HCT116 (cell line): ENCODE measurements at regions of chr1 and their contacts with region 1.

Region 1: DNA sequence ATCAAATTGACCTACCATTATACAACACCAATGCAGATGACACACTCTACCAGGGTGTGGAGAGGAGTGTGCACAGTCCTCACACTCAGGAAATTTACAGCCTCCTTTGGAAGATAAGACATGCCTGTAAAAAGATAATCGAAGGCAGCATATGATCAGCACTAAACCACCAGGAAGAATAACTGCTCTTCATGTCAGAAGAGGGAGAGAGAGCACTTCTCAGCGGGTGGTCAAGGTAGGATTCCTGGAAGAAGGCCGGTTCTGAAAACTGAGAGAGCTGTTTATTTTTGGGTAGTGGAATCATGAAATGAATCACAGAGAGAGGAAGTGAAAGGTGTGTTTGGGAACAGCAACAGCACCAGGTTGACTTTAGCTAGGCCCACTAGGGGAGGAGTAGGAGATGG is 14.0 kb upstream of the ZNF697 start:
- DNase-seq: no peak
- ATAC-seq: no peak
- H3K4me3 ChIP-seq: no peak overlapping the region
- H3K27ac ChIP-seq: no peak overlapping the region
- H3K4me1 ChIP-seq: peaks cover 0 to 5% of the 10 kb centered on the region in 2 experiments; a peak in 1 of 4 replicates
- H3K27me3 ChIP-seq: peaks cover 2% of the 10 kb centered on the region; the same call in 1 of the 2 replicates
- CTCF ChIP-seq: 0 out of 6 replicates have a peak, but pooled peaks of 1 of the 3 experiments have one; percentile 3
- POLR2A ChIP-seq: no peak
- RAD21 ChIP-seq: no peak

Region 2: GRCh38 chr1:119621705-119622104 is 40.3 kb before region 1 on chr1:
- CTCF ChIA-PET with region 1: interaction called, 4 read pairs
- POLR2A ChIA-PET with region 1: no interaction called
- RAD21 ChIA-PET with region 1: no interaction called
- intact Hi-C with region 1: loop called (anchors 2 kb)
- DNase-seq: no peak
- ATAC-seq: no peak
- H3K4me3 ChIP-seq: no peak overlapping the region
- H3K27ac ChIP-seq: no peak overlapping the region
- H3K4me1 ChIP-seq: no peaks in the 10 kb centered on the region
- H3K27me3 ChIP-seq: no peaks in the 10 kb centered on the region
- CTCF ChIP-seq: no peak
- POLR2A ChIP-seq: no peak
- RAD21 ChIP-seq: no peak

Region 3: GRCh38 chr1:119795261-119796200 is 133.5 kb after region 1 on chr1:
- CTCF ChIA-PET with region 1: no interaction called
- POLR2A ChIA-PET with region 1: no interaction called
- RAD21 ChIA-PET with region 1: no interaction called
- intact Hi-C with region 1: no loop called
- DNase-seq: no peak
- ATAC-seq: no peak
- H3K4me3 ChIP-seq: no peak overlapping the region
- H3K27ac ChIP-seq: no peak overlapping the region
- H3K4me1 ChIP-seq: no peaks in the 10 kb centered on the region
- H3K27me3 ChIP-seq: no peaks in the 10 kb centered on the region
- CTCF ChIP-seq: no peak
- POLR2A ChIP-seq: no peak
- RAD21 ChIP-seq: no peak